Naive thymus-derived CD4-positive, alpha-beta T cell (primary cell): ENCODE measurements at regions of chr1 and their contacts with region 1.

Region 1: GRCh38 chr1:37486680-37487618 is 12.6 kb downstream of the ZC3H12A start:
- DNase-seq: peak; percentile 57 to 85 (median 72)
- ATAC-seq: peak; percentile 82
- H3K4me3 ChIP-seq: no peak overlapping the region
- H3K4me3 Mint-ChIP-seq: peak overlapping the region in 1 of 10 donors; percentile 66
- H3K27ac ChIP-seq: peak overlapping the region; percentile 54
- H3K27ac Mint-ChIP-seq: peak overlapping the region; percentile 10 to 91 (median 72)
- H3K4me1 ChIP-seq: peaks cover 9 to 11% of the 10 kb centered on the region in 2 donors
- H3K4me1 Mint-ChIP-seq: peaks cover 11 to 26% (median 17%) of the 10 kb centered on the region in 7 donors
- H3K27me3 ChIP-seq: no peaks in the 10 kb centered on the region
- H3K27me3 Mint-ChIP-seq: no peaks in the 10 kb centered on the region

Region 2: DNA sequence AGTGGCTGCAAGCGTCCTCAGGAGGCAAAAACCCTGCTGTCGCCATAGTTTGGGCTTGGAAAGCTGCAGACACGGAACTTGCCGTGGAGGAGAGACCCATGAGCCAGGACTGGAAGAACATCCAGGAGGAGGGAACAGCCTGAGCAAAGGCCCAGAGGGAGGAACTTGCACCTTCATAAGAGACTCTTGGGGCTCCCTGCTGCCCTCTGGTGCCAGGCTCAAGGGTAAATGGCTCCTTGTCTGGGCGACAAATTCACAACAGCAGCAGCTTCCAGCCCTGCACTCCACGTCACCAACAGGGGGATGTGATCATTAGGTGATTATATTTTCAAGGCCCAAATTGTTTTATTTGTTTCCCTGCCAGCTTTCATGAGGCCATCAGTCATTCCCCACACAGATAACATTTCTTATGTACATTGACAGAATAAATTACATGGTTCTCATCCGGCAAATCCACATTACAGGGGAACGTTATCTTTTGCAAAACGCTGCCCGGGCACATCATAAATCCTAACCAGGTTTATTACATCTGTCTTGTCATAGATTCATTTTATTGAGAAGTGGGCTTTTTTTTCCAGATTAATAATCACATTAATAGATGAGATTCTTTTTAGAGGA is 309.6 kb before region 1 on chr1:
- CTCF ChIA-PET with region 1: no interaction called
- POLR2A ChIA-PET with region 1: no interaction called
- intact Hi-C with region 1: no loop called
- DNase-seq: no peak
- ATAC-seq: no peak
- H3K4me3 ChIP-seq: no peak overlapping the region
- H3K4me3 Mint-ChIP-seq: no peak overlapping the region
- H3K27ac ChIP-seq: no peak overlapping the region
- H3K27ac Mint-ChIP-seq: no peak overlapping the region
- H3K4me1 ChIP-seq: no peaks in the 10 kb centered on the region
- H3K4me1 Mint-ChIP-seq: no peaks in the 10 kb centered on the region
- H3K27me3 ChIP-seq: no peaks in the 10 kb centered on the region
- H3K27me3 Mint-ChIP-seq: peaks cover 4 to 72% (median 42%) of the 10 kb centered on the region in 5 donors

Region 3: DNA sequence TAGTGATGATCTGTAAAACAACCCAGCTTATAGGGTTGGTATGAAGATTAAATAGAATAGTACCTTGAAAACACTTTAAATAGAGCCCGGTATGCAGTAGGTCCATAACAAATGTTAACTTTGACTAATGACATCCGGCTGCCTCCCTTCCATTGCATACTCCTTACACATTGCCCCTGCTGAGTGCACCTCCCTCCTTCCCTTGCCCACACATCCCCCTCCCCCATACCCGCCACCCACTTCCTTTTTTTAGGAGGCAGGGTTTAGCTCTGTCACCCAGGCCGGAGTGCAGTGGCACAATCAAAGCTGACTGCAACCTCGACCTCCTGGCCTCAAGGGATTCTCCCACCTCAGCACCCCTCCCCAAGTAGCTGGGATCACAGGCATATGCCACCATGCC is 37.0 kb before region 1 on chr1:
- CTCF ChIA-PET with region 1: interaction called, 249 read pairs
- POLR2A ChIA-PET with region 1: interaction called, 11 read pairs
- intact Hi-C with region 1: loop called (anchors 1 kb)
- DNase-seq: peak in 6 of 9 donors; percentile 20 to 48 (median 39)
- ATAC-seq: peak; percentile 82
- H3K4me3 ChIP-seq: no peak overlapping the region
- H3K4me3 Mint-ChIP-seq: peak overlapping the region in 6 of 10 donors; percentile 29 to 65 (median 48)
- H3K27ac ChIP-seq: no peak overlapping the region
- H3K27ac Mint-ChIP-seq: peak overlapping the region in 7 of 9 donors; percentile 10 to 77 (median 38)
- H3K4me1 ChIP-seq: peaks cover 0 to 8% of the 10 kb centered on the region in 2 donors
- H3K4me1 Mint-ChIP-seq: peaks cover 5 to 17% (median 13%) of the 10 kb centered on the region in 7 donors
- H3K27me3 ChIP-seq: no peaks in the 10 kb centered on the region
- H3K27me3 Mint-ChIP-seq: peaks cover 0 to 15% (median 8%) of the 10 kb centered on the region in 5 donors

Region 4: GRCh38 chr1:37458528-37458927 is 28.4 kb before region 1 on chr1:
- CTCF ChIA-PET with region 1: interaction called, 249 read pairs
- POLR2A ChIA-PET with region 1: interaction called, 11 read pairs
- intact Hi-C with region 1: loop called (anchors 1 kb)
- DNase-seq: no peak
- ATAC-seq: no peak
- H3K4me3 ChIP-seq: no peak overlapping the region
- H3K4me3 Mint-ChIP-seq: no peak overlapping the region
- H3K27ac ChIP-seq: no peak overlapping the region
- H3K27ac Mint-ChIP-seq: peak overlapping the region in 3 of 9 donors; percentile 30 to 78 (median 46)
- H3K4me1 ChIP-seq: no peaks in the 10 kb centered on the region
- H3K4me1 Mint-ChIP-seq: peaks cover 4 to 16% (median 11%) of the 10 kb centered on the region in 7 donors
- H3K27me3 ChIP-seq: no peaks in the 10 kb centered on the region
- H3K27me3 Mint-ChIP-seq: no peaks in the 10 kb centered on the region

Region 5: GRCh38 chr1:37465593-37466517 is 21.1 kb before region 1 on chr1:
- CTCF ChIA-PET with region 1: interaction called, 249 read pairs
- POLR2A ChIA-PET with region 1: interaction called, 90 read pairs
- intact Hi-C with region 1: no loop called
- DNase-seq: no peak
- ATAC-seq: no peak
- H3K4me3 ChIP-seq: no peak overlapping the region
- H3K4me3 Mint-ChIP-seq: no peak overlapping the region
- H3K27ac ChIP-seq: no peak overlapping the region
- H3K27ac Mint-ChIP-seq: no peak overlapping the region
- H3K4me1 ChIP-seq: no peaks in the 10 kb centered on the region
- H3K4me1 Mint-ChIP-seq: peaks cover 5 to 21% (median 10%) of the 10 kb centered on the region in 7 donors
- H3K27me3 ChIP-seq: no peaks in the 10 kb centered on the region
- H3K27me3 Mint-ChIP-seq: no peaks in the 10 kb centered on the region

Region 6: DNA sequence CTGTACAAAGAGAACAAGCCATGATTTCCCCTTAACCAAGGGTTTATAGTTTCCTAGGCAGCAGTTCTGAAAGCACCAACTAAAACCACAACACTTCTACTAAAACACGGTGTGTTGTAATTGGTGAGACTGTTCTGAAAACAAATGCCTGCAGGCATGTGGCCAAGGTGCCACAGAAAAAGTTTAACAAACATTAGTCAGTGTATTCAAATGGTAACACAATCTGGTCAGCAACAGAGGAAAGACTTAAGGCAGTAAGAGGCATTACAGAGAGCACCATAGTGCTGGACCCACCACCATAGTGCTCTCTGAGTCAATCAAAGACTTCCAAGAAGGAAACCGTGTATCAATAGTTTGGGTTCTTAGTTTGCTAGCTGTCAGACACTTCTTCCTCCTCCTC is 50.4 kb after region 1 on chr1:
- CTCF ChIA-PET with region 1: no interaction called
- POLR2A ChIA-PET with region 1: no interaction called
- intact Hi-C with region 1: no loop called
- DNase-seq: no peak
- ATAC-seq: no peak
- H3K4me3 ChIP-seq: no peak overlapping the region
- H3K4me3 Mint-ChIP-seq: no peak overlapping the region
- H3K27ac ChIP-seq: no peak overlapping the region
- H3K27ac Mint-ChIP-seq: peak overlapping the region in 2 of 9 donors; percentile 44 to 60
- H3K4me1 ChIP-seq: no peaks in the 10 kb centered on the region
- H3K4me1 Mint-ChIP-seq: peaks cover 4 to 22% (median 12%) of the 10 kb centered on the region in 7 donors
- H3K27me3 ChIP-seq: no peaks in the 10 kb centered on the region
- H3K27me3 Mint-ChIP-seq: no peaks in the 10 kb centered on the region

Region 7: GRCh38 chr1:38045431-38046332 is 558.7 kb after region 1 on chr1:
- CTCF ChIA-PET with region 1: no interaction called
- POLR2A ChIA-PET with region 1: no interaction called
- intact Hi-C with region 1: no loop called
- DNase-seq: no peak
- ATAC-seq: no peak
- H3K4me3 ChIP-seq: no peak overlapping the region
- H3K4me3 Mint-ChIP-seq: peak overlapping the region in 8 of 10 donors; percentile 29 to 83 (median 52)
- H3K27ac ChIP-seq: no peak overlapping the region
- H3K27ac Mint-ChIP-seq: no peak overlapping the region
- H3K4me1 ChIP-seq: peaks cover 9 to 15% of the 10 kb centered on the region in 2 donors
- H3K4me1 Mint-ChIP-seq: peaks cover 3 to 16% (median 11%) of the 10 kb centered on the region in 7 donors
- H3K27me3 ChIP-seq: peaks cover 9 to 15% of the 10 kb centered on the region in 2 donors
- H3K27me3 Mint-ChIP-seq: peaks cover 37 to 62% (median 40%) of the 10 kb centered on the region in 5 donors